ENCODE measurements at regions of chr1 and their contacts with region 1.

Region 1: GRCh38 chr1:11838349-11839272 is 9.0 kb downstream of the NPPA start:
- DNase-seq: peak; percentile 94

Region 2: DNA sequence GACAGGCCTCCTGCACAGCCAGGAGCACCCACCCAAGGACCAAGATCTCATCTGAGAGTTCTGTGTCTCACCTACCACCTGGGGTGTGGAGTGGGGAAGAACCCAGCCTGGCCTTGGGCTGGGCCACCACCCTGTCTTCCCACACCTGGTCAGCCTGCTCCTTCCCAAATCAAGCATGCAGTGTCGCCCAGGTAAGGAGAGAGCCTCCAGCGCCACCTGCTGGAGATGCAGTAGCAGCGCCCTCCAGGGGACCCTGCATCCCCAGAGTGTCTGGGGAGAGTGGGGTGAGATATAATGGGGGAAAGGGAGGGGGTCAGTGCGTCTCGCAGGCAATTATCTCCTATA is 55.3 kb after region 1 on chr1:
- intact Hi-C with region 1: loop called (anchors 5 to 10 kb)
- DNase-seq: no peak

Region 3: DNA sequence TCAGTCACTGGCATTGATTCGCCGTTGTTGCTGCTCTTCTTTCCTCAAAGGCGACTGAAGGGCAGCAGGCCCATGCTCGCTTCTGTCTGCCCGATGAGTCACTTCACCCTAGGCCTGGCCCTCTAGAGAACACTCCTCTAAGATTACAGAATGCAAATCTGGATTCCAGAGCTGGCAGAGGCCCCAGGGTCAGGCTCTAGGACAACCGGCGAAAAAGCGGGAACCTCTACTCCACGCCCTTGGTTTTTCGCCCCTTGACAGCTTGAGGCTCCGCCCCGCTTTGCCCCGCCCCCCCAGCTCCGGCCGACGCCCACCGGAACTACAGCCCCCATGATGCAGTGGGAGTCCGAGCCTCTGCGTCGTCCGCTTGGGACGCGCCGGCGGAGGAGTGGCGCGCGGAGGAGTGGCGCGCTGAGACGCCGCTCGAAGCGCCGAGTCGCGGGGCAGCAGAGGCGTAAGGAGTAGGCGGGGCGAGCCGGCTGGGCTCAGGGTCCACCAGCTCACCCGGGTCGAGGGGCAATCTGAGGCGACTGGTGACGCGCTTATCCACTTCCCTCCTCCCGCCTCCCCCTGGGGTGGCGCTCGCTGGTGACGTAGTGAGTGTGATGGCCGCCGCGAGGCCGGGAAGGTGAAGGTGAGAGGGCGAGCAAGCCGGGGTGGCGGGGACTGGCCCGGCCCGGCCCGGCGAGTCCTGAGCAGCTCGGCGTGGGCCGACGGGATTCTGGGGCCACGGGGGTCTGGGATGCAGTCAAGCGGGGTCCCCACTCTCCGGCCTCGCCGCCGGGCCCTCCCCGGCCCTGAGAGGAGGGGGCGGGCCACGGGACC is 141.5 kb after region 1 on chr1 and contains the start of gene MFN2:
- intact Hi-C with region 1: loop called in 1 of 2 experiments (anchors 10 kb)
- DNase-seq: peak; percentile 98
- total RNA-seq, gene MFN2: 94.8 to 102 TPM

Measured in posterior vena cava (tissue), 2 donors.